BJ (cell line): ENCODE measurements at regions of chr1 and their contacts with region 1.

Region 1: DNA sequence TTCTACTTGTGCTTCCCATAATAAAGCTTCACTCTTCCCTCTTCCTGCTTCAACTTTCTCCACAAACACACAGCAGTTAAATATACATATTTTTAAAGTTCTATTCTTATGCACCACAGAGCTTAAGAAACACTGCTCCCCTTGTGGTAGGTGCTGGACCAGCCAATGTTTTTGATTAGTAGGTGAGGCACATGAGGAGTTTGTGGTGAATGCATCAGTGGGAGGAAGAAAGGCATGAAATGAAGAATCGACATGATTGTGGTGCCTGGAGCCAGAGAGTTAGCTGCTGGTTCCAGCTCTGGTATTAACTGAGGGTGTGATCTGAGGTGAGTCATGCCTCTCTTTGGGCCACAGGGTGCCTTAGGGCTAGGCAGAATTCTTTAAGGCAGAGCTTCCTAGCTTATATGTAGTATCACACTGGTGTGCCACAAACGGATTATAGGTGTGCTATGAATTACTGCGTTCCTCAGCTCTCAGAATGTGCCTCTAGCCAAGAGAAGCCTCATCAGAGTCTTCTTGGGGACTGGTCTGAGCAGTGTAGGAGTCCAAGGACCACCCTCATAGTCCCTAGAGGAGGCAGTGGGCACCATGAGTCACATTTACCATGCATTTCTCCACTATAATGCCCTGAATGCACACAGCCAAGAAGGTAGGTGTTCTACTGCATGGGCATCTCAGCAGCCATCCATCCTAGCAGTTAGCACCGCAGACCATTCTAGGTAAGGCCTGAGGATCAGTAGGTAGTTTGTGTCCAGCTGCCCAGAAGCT is 97.4 kb upstream of the SGIP1 start:
- DNase-seq: peak; percentile 75
- H3K4me3 ChIP-seq: no peak overlapping the region
- H3K27me3 ChIP-seq: no peaks in the 10 kb centered on the region
- CTCF ChIP-seq: peak; percentile 69

Region 2: DNA sequence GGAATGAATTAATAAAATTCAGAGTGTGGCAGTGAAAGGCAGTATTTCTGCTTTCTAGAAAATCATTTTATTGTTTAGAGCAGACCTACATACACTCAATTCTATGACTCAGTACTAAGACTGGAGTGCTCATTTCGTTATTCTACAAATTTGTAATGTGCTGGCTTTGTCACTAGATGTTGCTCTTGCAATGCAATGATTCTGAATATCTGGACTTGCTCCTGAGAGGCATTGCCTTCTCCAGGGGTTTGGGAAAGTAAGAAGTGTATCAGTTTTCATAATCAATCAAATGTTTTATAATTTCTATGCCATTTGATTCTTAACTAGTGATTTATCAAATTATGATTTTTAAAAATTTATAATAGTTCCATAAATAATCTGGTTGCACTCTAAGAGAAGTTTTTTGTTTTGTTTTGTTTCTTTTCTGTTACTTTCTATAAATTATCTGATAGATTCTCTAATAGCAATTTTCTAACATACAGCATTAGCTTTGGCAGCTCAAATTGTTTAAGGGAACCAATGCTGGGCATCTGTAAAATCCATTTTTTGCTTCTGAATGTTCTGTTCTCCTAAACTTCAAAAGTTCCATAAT is 183.1 kb before region 1 on chr1:
- CTCF ChIA-PET with region 1: interaction called, 27 read pairs
- POLR2A ChIA-PET with region 1: no interaction called
- DNase-seq: no peak
- H3K4me3 ChIP-seq: no peak overlapping the region
- H3K27me3 ChIP-seq: no peaks in the 10 kb centered on the region
- CTCF ChIP-seq: peak; percentile 72

Region 3: DNA sequence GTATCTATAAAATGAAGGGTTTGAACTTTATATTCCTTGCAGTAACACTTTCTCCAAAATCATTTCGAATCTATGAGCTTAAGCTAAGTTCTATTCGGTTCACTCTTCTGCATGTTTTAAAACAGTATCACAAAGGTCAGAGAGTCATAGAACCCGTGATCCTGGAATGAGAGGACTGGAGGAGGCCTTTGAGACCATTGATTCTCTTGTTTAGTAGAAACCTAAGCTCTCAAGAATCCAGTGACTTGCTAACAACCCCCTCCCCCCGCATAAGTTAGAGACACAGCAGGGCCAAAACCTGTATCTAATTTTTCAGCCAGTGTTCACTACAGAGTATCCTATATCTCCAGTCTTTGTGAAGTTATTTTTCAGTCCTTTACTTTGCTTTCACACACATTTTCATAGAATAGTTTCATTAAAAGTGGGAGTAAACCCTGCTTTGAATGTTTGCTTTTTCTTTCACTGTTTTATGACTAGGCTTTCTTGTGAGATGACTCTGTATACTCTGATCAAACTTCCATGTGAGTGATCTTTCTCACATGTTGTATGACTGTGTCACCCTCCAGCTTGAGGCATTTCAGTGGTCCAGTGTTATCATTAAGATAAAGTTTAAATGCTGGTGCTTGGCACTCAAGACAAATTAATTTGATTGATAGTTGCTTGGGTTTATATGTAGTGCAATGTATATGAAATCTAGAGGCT is 178.0 kb before region 1 on chr1:
- CTCF ChIA-PET with region 1: interaction called, 27 read pairs
- POLR2A ChIA-PET with region 1: no interaction called
- DNase-seq: no peak
- H3K4me3 ChIP-seq: no peak overlapping the region
- H3K27me3 ChIP-seq: no peaks in the 10 kb centered on the region
- CTCF ChIP-seq: no peak

Region 4: GRCh38 chr1:66364578-66365391 is 71.8 kb before region 1 on chr1:
- CTCF ChIA-PET with region 1: interaction called, 21 read pairs
- POLR2A ChIA-PET with region 1: interaction called, 3 read pairs
- DNase-seq: peak; percentile 64
- H3K4me3 ChIP-seq: no peak overlapping the region
- H3K27me3 ChIP-seq: no peaks in the 10 kb centered on the region
- CTCF ChIP-seq: no peak